ENCODE measurements at regions of chr7 and their contacts with region 1.

Region 1: GRCh38 chr7:121547544-121548092 is 151.5 kb upstream of the FAM3C start:
- H3K4me3 Mint-ChIP-seq: no peak overlapping the region
- H3K27ac Mint-ChIP-seq: no peak overlapping the region
- H3K4me1 Mint-ChIP-seq: no peaks in the 10 kb centered on the region
- H3K27me3 Mint-ChIP-seq: no peaks in the 10 kb centered on the region

Region 2: GRCh38 chr7:121366852-121367431 is 180.7 kb before region 1 on chr7:
- intact Hi-C with region 1: loop called (anchors 1 kb)
- H3K4me3 Mint-ChIP-seq: no peak overlapping the region
- H3K27ac Mint-ChIP-seq: no peak overlapping the region
- H3K4me1 Mint-ChIP-seq: no peaks in the 10 kb centered on the region
- H3K27me3 Mint-ChIP-seq: no peaks in the 10 kb centered on the region

Region 3: GRCh38 chr7:121530227-121531174 is 17.1 kb before region 1 on chr7:
- intact Hi-C with region 1: no loop called
- H3K4me3 Mint-ChIP-seq: no peak overlapping the region
- H3K27ac Mint-ChIP-seq: no peak overlapping the region
- H3K4me1 Mint-ChIP-seq: no peaks in the 10 kb centered on the region
- H3K27me3 Mint-ChIP-seq: peaks cover 1% of the 10 kb centered on the region

Measured in dendritic cell treated with granulocyte-macrophage colony-stimulating factor and Interleukin-4, amounts not matched to agents 40 ng/mL and 50 ng/mL, for 4 days (primary cell).